Dendritic cell treated with granulocyte-macrophage colony-stimulating factor and Interleukin-4, amounts not matched to agents 40 ng/mL and 50 ng/mL, for 4 days (primary cell): ENCODE measurements at regions of chr1 and their contacts with region 1.

Region 1: DNA sequence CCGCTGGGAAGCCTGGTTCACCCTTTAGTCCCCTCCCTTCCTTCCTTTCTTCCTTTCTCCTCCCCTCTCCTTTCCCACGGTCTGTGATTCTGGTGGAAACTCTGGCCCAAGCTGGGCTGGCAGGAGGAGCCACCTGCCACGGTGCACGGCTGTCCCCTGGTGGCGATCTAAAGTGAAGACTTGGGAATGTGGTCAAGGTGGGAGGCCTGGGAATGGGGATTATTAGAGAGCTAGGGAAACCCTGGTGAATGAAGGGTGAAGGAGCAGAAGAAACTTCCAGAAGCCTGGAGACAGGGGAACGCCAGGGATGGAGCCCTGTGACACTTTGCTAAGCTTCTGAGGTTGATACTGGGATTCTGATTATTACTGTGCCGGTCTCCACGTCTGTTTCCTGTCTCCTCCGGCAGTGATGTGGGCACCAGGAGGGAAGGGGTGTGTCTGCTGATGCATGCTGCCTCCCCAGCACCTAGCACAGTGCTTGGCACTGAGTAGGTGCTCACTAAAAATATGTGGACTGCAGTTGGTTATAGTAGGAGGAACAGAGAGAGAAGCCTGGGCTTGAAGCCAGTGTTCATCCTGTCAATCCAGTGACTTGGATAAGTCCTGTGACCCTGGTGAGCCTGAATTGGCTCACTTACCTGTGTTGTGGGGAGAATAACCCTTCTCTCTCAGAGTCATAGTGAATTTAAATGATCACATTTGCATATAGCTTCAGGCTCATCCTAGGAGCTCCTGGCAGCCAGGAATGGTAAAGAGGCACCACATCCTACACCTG is 71.2 kb upstream of the NBPF3 start:
- H3K4me3 Mint-ChIP-seq: no peak overlapping the region
- H3K27ac Mint-ChIP-seq: no peak overlapping the region
- H3K4me1 Mint-ChIP-seq: peaks cover 15% of the 10 kb centered on the region
- H3K27me3 Mint-ChIP-seq: peaks cover 52% of the 10 kb centered on the region

Region 2: GRCh38 chr1:21232044-21232443 is 136.7 kb before region 1 on chr1:
- intact Hi-C with region 1: loop called (anchors 1 kb)
- H3K4me3 Mint-ChIP-seq: no peak overlapping the region
- H3K27ac Mint-ChIP-seq: no peak overlapping the region
- H3K4me1 Mint-ChIP-seq: no peaks in the 10 kb centered on the region
- H3K27me3 Mint-ChIP-seq: peaks cover 8% of the 10 kb centered on the region

Region 3: DNA sequence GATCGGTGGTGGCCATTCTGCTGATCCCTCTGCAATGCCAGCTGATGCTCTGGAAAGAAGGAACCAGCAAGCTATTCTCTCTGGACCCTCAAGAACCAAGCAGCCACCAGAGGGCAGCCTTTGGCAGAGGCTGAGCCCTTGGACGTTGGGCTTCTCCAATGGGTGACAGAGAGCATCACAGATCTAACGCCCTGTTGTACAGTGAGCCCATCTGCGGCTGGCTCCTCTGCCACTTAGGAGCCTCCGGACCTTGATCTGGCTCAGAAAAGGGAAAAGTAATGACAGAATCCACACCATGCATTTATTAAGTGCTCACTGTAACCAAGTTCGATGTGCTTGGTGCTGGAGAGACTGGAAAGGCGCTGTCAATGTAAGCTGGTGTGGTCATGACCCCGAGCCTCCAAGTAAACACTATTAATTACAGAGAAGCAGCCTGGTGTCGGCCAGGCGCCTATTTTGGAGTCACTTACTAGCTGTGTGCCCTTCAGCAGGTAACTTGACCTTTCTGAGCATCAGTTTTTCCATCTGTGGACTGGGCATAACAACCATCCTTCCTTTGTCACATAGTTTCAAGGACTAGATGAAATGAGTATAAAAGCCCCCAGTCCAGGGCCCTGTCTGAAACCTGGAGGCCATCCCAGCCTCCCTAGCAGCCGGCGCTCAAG is 113.3 kb before region 1 on chr1:
- intact Hi-C with region 1: loop called (anchors 1 kb)
- H3K4me3 Mint-ChIP-seq: no peak overlapping the region
- H3K27ac Mint-ChIP-seq: no peak overlapping the region
- H3K4me1 Mint-ChIP-seq: peaks cover 8% of the 10 kb centered on the region
- H3K27me3 Mint-ChIP-seq: peaks cover 49% of the 10 kb centered on the region

Region 4: DNA sequence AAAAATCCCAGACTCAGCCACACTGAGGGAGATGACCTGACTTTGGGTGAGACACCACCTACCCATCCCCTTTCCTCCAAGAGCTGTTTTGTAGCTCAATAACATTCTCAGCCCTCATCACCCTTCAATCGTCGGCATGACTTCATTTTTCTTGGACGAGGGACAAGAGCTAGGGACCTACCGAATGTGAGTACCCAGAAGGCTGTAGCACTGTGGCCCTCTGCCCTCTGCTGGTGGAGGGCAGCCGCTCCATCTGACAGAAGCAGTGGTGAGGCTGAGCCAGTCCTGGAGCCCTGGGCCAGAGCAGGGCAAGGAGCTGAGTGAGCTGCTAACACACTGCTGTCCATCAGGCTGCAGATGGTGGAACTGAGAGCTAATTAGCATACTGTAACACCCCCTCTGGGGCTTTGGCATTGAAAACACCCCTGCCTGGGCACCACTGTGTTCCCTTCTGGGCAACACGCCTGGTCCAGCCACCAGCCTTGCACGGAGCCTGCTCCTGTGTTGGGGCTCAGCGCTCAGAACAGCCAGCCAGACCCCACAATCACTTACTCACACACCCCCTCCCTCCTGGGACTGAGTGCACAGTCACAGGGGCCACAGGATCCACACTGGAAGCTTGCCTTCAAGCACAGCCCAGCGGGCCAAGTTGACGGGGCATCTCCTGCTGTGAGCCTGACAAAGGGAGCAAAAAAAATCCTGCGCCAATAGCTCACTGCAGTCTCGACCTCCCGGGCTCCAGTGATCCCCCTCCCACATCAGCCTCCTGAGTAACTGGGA is 122.3 kb after region 1 on chr1:
- intact Hi-C with region 1: loop called (anchors 5 kb)
- H3K4me3 Mint-ChIP-seq: no peak overlapping the region
- H3K27ac Mint-ChIP-seq: no peak overlapping the region
- H3K4me1 Mint-ChIP-seq: peaks cover 9% of the 10 kb centered on the region
- H3K27me3 Mint-ChIP-seq: peaks cover 34% of the 10 kb centered on the region

Region 5: DNA sequence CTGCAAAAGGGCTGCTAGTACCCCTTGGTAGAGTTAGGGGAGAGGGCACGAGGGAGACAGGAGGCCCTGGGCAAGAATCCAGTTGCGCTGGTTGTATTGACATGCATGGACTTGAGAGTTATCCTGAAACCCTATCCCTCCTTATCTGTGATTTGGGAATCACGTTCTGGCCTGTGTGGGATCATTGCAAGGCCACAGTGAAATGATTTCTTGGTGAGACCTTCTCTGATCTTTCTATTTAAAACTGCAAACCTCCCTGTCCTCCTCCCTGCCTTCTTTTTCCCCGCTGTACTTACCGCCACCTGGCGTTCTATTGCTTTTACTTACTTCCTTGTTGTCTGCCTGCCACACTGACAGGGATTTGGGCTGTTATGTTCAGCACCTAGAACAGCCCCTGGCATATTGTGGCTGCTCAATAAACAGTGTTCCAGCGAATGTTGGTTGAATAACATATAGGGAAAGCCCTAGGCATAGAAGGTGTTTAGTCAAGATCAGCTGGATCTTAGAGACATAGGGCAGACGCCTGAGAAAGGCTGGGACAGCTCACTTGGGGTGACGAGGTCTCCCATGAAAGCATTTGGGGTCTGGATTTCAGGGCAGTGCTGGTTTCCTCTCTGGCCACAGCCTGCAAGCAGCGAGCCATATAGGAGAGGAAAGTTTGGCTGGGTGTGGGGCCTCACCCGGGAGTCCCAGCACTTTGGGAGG is 166.1 kb after region 1 on chr1:
- intact Hi-C with region 1: loop called (anchors 2 kb)
- H3K4me3 Mint-ChIP-seq: no peak overlapping the region
- H3K27ac Mint-ChIP-seq: no peak overlapping the region
- H3K4me1 Mint-ChIP-seq: no peaks in the 10 kb centered on the region
- H3K27me3 Mint-ChIP-seq: peaks cover 78% of the 10 kb centered on the region

Region 6: GRCh38 chr1:21659099-21659923 is 290.6 kb after region 1 on chr1:
- intact Hi-C with region 1: loop called (anchors 1 kb)
- H3K4me3 Mint-ChIP-seq: peak overlapping the region; percentile 23
- H3K27ac Mint-ChIP-seq: no peak overlapping the region
- H3K4me1 Mint-ChIP-seq: peaks cover 17% of the 10 kb centered on the region
- H3K27me3 Mint-ChIP-seq: peaks cover 62% of the 10 kb centered on the region